PC-9 (cell line): ENCODE measurements at regions of chr20 and their contacts with region 1.

Region 1: GRCh38 chr20:53828682-53829254 is 235.1 kb upstream of the ZNF217 start:
- DNase-seq: peak in 1 of 2 experiments; percentile 49
- H3K4me3 ChIP-seq: peak overlapping the region; percentile 56
- H3K27ac ChIP-seq: peak overlapping the region; percentile 100
- H3K4me1 ChIP-seq: peaks cover 55% of the 10 kb centered on the region
- H3K27me3 ChIP-seq: no peaks in the 10 kb centered on the region
- CTCF ChIP-seq: peak; percentile 46

Region 2: DNA sequence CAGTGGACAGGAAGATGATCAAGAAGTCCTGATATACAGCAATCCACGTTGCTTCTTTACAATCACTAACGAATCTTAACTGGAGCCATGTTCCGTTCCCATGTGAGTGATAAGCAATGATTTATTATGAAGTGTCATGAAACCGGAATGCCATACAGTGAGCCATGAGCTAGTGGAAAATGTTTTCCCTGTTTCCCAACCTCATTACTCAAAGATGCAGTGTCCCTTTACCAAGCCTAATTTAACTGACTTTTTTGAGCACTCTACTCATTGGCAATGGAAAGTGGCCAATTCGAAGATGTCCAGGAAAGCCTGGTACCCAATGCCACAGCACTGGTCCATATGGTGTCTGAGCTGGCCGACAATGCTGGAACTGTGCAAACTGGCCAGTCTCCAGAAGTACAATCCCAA is 383.4 kb before region 1 on chr20:
- CTCF ChIA-PET with region 1: no interaction called
- POLR2A ChIA-PET with region 1: interaction called, 30 read pairs
- intact Hi-C with region 1: no loop called
- DNase-seq: no peak
- H3K4me3 ChIP-seq: no peak overlapping the region
- H3K27ac ChIP-seq: no peak overlapping the region
- H3K4me1 ChIP-seq: no peaks in the 10 kb centered on the region
- H3K27me3 ChIP-seq: peaks cover 67% of the 10 kb centered on the region
- CTCF ChIP-seq: no peak

Region 3: GRCh38 chr20:53524589-53525312 is 304.0 kb before region 1 on chr20:
- CTCF ChIA-PET with region 1: no interaction called
- POLR2A ChIA-PET with region 1: no interaction called
- intact Hi-C with region 1: no loop called
- DNase-seq: no peak
- H3K4me3 ChIP-seq: no peak overlapping the region
- H3K27ac ChIP-seq: no peak overlapping the region
- H3K4me1 ChIP-seq: no peaks in the 10 kb centered on the region
- H3K27me3 ChIP-seq: 0 out of 2 replicates have a peak, but pooled peaks cover 8% of the 10 kb centered on the region
- CTCF ChIP-seq: no peak

Region 4: GRCh38 chr20:53594068-53595017 is 234.4 kb before region 1 on chr20:
- CTCF ChIA-PET with region 1: no interaction called
- POLR2A ChIA-PET with region 1: no interaction called
- intact Hi-C with region 1: loop called (anchors 2 kb)
- DNase-seq: peak; percentile 73 to 98
- H3K4me3 ChIP-seq: peak overlapping the region; percentile 99
- H3K27ac ChIP-seq: peak overlapping the region; percentile 98
- H3K4me1 ChIP-seq: peaks cover 59% of the 10 kb centered on the region
- H3K27me3 ChIP-seq: no peaks in the 10 kb centered on the region
- CTCF ChIP-seq: no peak; the same call in 1 of the 2 replicates

Region 5: DNA sequence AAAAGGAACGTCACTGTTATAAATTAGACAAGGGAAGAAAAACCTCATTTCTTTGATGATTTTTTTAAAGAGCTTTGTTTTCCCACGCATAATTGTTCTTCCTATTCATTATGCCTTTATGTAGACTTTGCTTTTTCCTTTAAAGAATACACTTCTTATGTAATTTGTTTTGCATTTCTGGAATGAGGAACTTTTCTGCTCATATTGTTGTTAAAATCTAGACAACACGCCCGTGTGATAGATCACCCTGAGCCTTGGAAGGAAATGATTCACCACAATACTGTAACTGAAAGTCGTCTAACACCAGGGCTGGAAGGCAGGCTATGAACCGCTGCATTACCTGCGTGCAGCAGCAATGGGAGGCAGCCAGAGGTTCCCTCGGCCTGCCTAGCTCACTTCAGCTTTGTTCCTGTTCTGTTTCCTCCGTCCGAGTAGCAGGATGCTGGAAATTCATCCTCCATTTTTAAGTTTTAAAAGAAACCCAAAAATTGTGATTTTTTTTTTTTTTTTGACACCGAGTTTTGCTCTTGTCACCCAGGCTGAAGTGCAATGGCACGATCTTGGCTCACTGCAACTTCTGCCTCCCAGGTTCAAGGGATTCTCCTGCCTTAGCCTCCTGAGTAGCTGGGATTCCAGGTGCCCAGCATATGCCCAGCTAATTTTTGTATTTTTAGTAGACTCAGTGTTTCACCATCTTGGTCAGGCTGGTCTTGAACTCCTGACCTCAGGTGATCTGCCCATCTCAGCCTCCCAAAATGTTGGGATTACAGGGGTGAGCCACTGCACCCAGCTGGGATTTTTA is 185.5 kb before region 1 on chr20:
- CTCF ChIA-PET with region 1: no interaction called
- POLR2A ChIA-PET with region 1: no interaction called
- intact Hi-C with region 1: loop called (anchors 2 kb)
- DNase-seq: peak; percentile 73 to 98
- H3K4me3 ChIP-seq: peak overlapping the region; percentile 26
- H3K27ac ChIP-seq: peak overlapping the region; percentile 94
- H3K4me1 ChIP-seq: peaks cover 39% of the 10 kb centered on the region
- H3K27me3 ChIP-seq: no peaks in the 10 kb centered on the region
- CTCF ChIP-seq: no peak; the same call in 1 of the 2 replicates

Region 6: DNA sequence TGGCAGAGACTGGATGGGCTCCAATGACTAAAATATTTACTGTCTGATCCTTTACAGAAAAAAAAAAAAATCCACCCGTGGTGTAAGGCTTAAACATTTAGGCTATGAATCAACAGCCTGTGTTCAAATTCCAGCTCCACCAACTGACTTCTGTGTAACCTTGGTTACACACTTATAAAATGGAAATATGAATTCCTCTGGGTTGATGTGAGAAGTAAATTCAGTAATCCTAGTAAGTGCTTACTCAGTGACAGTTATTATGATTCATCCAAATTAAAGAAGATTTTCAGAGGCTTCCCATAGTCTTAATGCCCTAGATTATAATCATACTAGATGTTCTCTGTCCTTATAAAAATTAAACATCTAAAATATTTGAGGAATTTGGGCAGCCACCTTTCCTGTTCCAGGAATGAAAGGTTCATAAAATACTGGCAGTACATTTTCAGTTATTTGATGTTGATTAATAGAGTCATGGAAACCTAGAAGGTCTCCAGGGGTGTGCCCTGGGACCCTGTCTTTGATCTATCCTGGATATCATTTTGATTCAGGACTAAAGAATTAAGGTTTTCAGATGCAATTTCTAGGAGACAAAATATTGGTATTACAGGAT is 54.9 kb before region 1 on chr20:
- CTCF ChIA-PET with region 1: interaction called, 6 read pairs
- POLR2A ChIA-PET with region 1: interaction called, 11 read pairs
- intact Hi-C with region 1: loop called (anchors 1 kb)
- DNase-seq: peak; percentile 37 to 99
- H3K4me3 ChIP-seq: no peak overlapping the region
- H3K27ac ChIP-seq: peak overlapping the region; percentile 93
- H3K4me1 ChIP-seq: peaks cover 41% of the 10 kb centered on the region
- H3K27me3 ChIP-seq: no peaks in the 10 kb centered on the region
- CTCF ChIP-seq: no peak

Region 7: DNA sequence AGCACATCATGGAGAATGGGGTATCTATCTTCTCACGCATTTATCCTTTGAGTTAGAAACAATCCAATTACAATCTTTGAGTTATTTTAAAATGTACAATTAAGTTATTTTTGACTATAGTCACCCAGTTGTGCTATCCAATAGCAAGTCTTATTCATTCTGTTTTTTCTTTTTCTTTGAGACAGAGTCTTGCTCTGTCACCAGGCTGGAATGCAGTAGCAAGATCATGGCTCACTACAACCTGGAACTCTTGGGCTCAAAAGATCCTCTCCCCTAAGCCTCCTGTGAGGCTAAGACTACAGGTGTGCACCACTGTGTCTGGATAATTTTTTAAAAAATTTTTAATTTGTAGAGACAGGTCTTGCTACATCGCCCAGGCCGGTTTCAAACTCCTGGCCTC is 33.6 kb before region 1 on chr20:
- CTCF ChIA-PET with region 1: no interaction called
- POLR2A ChIA-PET with region 1: no interaction called
- intact Hi-C with region 1: no loop called
- DNase-seq: peak in 1 of 2 experiments; percentile 38
- H3K4me3 ChIP-seq: no peak overlapping the region
- H3K27ac ChIP-seq: no peak overlapping the region
- H3K4me1 ChIP-seq: peaks cover 36% of the 10 kb centered on the region
- H3K27me3 ChIP-seq: no peaks in the 10 kb centered on the region
- CTCF ChIP-seq: no peak

Region 8: GRCh38 chr20:53839423-53840176 is 10.8 kb after region 1 on chr20:
- CTCF ChIA-PET with region 1: interaction called, 11 read pairs
- POLR2A ChIA-PET with region 1: no interaction called
- intact Hi-C with region 1: no loop called
- DNase-seq: peak; percentile 75 to 93
- H3K4me3 ChIP-seq: no peak overlapping the region
- H3K27ac ChIP-seq: peak overlapping the region; percentile 71
- H3K4me1 ChIP-seq: peaks cover 33% of the 10 kb centered on the region
- H3K27me3 ChIP-seq: no peaks in the 10 kb centered on the region
- CTCF ChIP-seq: no peak

Region 9: DNA sequence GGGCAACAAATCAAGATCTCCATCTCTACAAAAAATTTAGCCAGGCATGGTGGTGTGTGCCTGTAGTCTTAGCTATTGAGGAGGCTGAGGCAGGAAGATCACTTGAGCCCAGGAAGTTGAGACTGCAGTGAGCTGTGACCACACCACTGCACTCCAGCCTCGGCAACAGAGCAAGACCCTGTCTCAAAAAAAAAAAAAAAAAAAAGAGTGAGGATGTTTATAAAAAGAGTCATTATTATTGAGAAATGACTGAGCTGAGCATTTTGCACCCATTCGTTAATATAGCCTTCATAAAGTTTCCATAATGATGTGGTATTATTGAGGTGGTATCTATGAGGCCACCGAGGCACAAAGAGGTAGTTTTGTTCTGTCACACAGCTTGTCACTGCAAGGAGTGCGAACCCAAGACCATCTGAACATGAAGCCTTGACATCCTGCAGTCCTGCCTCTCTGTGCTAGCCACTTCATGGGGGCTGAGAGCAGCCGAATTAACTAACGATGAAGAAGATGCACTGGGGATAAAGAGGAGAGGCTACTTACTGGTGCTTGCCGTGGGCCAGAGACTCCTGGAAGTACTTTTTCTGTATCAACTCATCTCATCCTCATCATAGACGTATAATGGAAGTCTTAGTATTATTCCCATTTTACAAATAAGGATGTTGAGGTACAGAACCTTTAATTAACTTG is 66.1 kb after region 1 on chr20:
- CTCF ChIA-PET with region 1: no interaction called
- POLR2A ChIA-PET with region 1: no interaction called
- intact Hi-C with region 1: no loop called
- DNase-seq: no peak
- H3K4me3 ChIP-seq: no peak overlapping the region
- H3K27ac ChIP-seq: no peak overlapping the region
- H3K4me1 ChIP-seq: peaks cover 28% of the 10 kb centered on the region
- H3K27me3 ChIP-seq: no peaks in the 10 kb centered on the region
- CTCF ChIP-seq: no peak